HepG2 (cell line): ENCODE measurements at regions of chr6 and their contacts with region 1.

Region 1: DNA sequence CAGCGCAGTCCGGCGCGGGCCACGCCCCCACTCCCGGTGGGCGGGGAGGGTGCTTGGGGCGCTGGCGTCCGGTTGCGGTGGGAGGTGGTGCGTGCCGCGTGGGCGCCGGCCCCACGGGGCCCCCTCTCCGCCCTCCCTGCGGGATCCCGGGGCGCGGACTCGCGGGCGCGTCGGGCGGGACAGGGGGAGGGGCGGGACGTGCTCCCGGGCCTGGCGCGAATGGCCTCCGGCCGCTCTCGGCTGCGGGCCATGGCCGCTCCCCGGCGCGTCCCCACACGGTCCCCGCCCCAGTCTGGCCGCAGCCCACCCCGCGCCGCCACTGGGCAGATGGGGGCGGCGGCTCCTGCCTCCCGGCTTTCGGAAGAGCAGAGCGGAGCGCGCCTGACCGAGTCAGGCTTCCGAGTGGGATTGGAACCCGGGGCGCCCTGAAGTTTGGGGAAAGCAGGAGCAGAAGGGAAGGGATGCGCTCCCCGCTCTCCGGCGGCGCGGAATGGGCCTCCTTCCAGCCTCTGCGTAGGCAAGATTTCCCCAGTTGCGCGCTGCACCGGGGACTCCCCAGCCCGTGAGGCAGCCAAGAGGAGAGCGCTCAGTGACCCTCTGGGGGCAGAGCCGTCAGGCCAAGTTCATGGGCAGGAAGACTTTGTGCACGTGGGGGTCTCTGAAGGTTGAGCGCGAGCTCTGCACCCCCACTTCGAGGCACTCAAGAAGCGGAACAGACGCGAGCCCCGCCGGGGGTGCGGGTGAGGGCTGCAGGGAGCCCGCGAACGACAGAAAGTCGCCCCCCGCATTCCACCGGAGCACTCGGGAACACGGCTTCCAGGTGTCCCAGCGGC is 565 bp upstream of the PPP1R3G start:
- DNase-seq: no peak
- ATAC-seq: peak; percentile 22
- H3K4me3 ChIP-seq: peak overlapping the region; percentile 49 to 71 (median 51); a peak in 5 of 6 replicates
- H3K27ac ChIP-seq: peak overlapping the region; percentile 81
- H3K4me1 ChIP-seq: peaks cover 73% of the 10 kb centered on the region
- H3K27me3 ChIP-seq: no peaks in the 10 kb centered on the region
- CTCF ChIP-seq: no peak
- EP300 ChIP-seq: peak in 1 of 2 experiments; percentile 4; a peak in 1 of 4 replicates
- POLR2A ChIP-seq: peak; percentile 31 to 35; a peak in 2 of 4 replicates
- RAD21 ChIP-seq: peak; percentile 73

Region 2: GRCh38 chr6:4647414-4648365 is 436.9 kb before region 1 on chr6:
- CTCF ChIA-PET with region 1: no interaction called
- POLR2A ChIA-PET with region 1: no interaction called
- in situ Hi-C with region 1: no loop called
- intact Hi-C with region 1: no loop called
- DNase-seq: peak; percentile 53
- ATAC-seq: peak; percentile 95
- H3K4me3 ChIP-seq: peak overlapping the region; percentile 4 to 53 (median 11); a peak in 4 of 6 replicates
- H3K27ac ChIP-seq: no peak overlapping the region
- H3K4me1 ChIP-seq: peaks cover 12% of the 10 kb centered on the region
- H3K27me3 ChIP-seq: peaks cover 0 to 29% of the 10 kb centered on the region in 2 experiments; a peak in 2 of 5 replicates
- CTCF ChIP-seq: 0 out of 2 replicates have a peak, but pooled peaks have one; percentile 25
- EP300 ChIP-seq: no peak
- POLR2A ChIP-seq: no peak
- RAD21 ChIP-seq: no peak

Region 3: GRCh38 chr6:5068153-5068751 is 16.3 kb before region 1 on chr6:
- CTCF ChIA-PET with region 1: no interaction called
- POLR2A ChIA-PET with region 1: interaction called, 4 read pairs
- in situ Hi-C with region 1: no loop called
- intact Hi-C with region 1: loop called (anchors 1 kb)
- DNase-seq: peak; percentile 97
- ATAC-seq: peak; percentile 100
- H3K4me3 ChIP-seq: no peak overlapping the region
- H3K27ac ChIP-seq: peak overlapping the region; percentile 83
- H3K4me1 ChIP-seq: peaks cover 69% of the 10 kb centered on the region
- H3K27me3 ChIP-seq: no peaks in the 10 kb centered on the region
- CTCF ChIP-seq: peak; percentile 62
- EP300 ChIP-seq: peak; percentile 74 to 96; a peak in 3 of 4 replicates
- POLR2A ChIP-seq: no peak
- RAD21 ChIP-seq: peak; percentile 66; the same call in 1 of the 2 replicates

Region 4: DNA sequence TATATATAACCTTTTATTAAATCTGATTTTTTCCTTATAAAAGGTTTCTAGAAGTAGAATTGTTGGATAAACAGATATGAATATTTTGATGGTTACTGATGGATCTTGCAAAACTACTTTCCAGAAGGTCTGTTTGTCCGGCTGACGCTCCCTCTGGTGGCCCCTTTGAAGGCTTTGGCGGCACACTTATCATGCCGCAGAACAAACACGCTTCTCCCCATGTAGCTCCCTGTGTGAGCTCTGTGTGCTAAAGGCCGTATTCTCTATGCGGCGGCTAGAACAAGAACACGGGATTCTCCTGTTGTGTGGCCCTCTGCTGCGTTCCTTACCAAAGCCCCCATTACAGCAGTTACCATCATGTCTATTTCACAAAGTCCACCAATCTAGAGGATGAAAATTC is 30.6 kb after region 1 on chr6:
- CTCF ChIA-PET with region 1: no interaction called
- POLR2A ChIA-PET with region 1: interaction called, 12 read pairs
- in situ Hi-C with region 1: no loop called
- intact Hi-C with region 1: loop called (anchors 5 kb)
- DNase-seq: peak; percentile 91
- ATAC-seq: peak; percentile 94
- H3K4me3 ChIP-seq: no peak overlapping the region
- H3K27ac ChIP-seq: peak overlapping the region; percentile 10
- H3K4me1 ChIP-seq: peaks cover 39% of the 10 kb centered on the region
- H3K27me3 ChIP-seq: no peaks in the 10 kb centered on the region
- CTCF ChIP-seq: peak; percentile 88
- EP300 ChIP-seq: peak in 1 of 2 experiments; percentile 75; a peak in 2 of 4 replicates
- POLR2A ChIP-seq: no peak
- RAD21 ChIP-seq: peak; percentile 88